PC-9 (cell line): ENCODE measurements at regions of chr10 and their contacts with region 1.

Region 1: GRCh38 chr10:58781873-58782488 is 269.3 kb downstream of the BICC1 start:
- DNase-seq: peak in 1 of 2 experiments; percentile 4
- H3K4me3 ChIP-seq: no peak overlapping the region
- H3K27ac ChIP-seq: no peak overlapping the region
- H3K4me1 ChIP-seq: no peaks in the 10 kb centered on the region
- H3K27me3 ChIP-seq: no peaks in the 10 kb centered on the region
- CTCF ChIP-seq: peak; percentile 84

Region 2: GRCh38 chr10:58734116-58734515 is 47.9 kb before region 1 on chr10:
- CTCF ChIA-PET with region 1: no interaction called
- POLR2A ChIA-PET with region 1: no interaction called
- intact Hi-C with region 1: no loop called
- DNase-seq: no peak
- H3K4me3 ChIP-seq: no peak overlapping the region
- H3K27ac ChIP-seq: no peak overlapping the region
- H3K4me1 ChIP-seq: no peaks in the 10 kb centered on the region
- H3K27me3 ChIP-seq: 0 out of 2 replicates have a peak, but pooled peaks cover 4% of the 10 kb centered on the region
- CTCF ChIP-seq: no peak

Region 3: GRCh38 chr10:58807629-58808022 is 25.6 kb after region 1 on chr10:
- CTCF ChIA-PET with region 1: no interaction called
- POLR2A ChIA-PET with region 1: no interaction called
- intact Hi-C with region 1: no loop called
- DNase-seq: peak in 1 of 2 experiments; percentile 43
- H3K4me3 ChIP-seq: no peak overlapping the region
- H3K27ac ChIP-seq: no peak overlapping the region
- H3K4me1 ChIP-seq: peaks cover 10% of the 10 kb centered on the region; the same call in 1 of the 2 replicates
- H3K27me3 ChIP-seq: no peaks in the 10 kb centered on the region
- CTCF ChIP-seq: no peak

Region 4: DNA sequence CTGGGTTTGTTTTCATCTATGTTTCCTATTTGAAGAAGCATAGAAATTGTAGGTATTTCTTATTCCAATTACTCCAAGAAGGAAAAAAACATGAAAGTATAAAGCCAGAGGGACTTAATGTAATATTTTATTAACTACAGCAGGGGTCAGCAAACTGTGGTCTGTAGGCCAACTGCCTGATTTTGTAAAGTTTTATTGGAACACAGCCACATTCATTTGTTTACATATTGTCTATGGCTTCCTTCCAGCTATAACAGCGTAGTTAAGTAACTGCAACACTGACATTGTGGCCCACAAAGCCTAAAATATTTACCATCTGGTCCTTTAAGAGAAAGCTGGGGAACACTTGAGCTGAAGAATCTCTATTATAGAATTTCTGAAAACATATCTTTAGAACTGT is 36.9 kb after region 1 on chr10:
- CTCF ChIA-PET with region 1: no interaction called
- POLR2A ChIA-PET with region 1: no interaction called
- intact Hi-C with region 1: no loop called
- DNase-seq: peak in 1 of 2 experiments; percentile 64
- H3K4me3 ChIP-seq: no peak overlapping the region
- H3K27ac ChIP-seq: no peak overlapping the region
- H3K4me1 ChIP-seq: peaks cover 22% of the 10 kb centered on the region
- H3K27me3 ChIP-seq: no peaks in the 10 kb centered on the region
- CTCF ChIP-seq: no peak

Region 5: GRCh38 chr10:58919927-58920654 is 138.1 kb after region 1 on chr10:
- CTCF ChIA-PET with region 1: no interaction called
- POLR2A ChIA-PET with region 1: no interaction called
- intact Hi-C with region 1: loop called (anchors 5 kb)
- DNase-seq: peak in 1 of 2 experiments; percentile 74
- H3K4me3 ChIP-seq: no peak overlapping the region
- H3K27ac ChIP-seq: peak overlapping the region; percentile 17; the same call in 1 of the 2 replicates
- H3K4me1 ChIP-seq: 0 out of 2 replicates have a peak, but pooled peaks cover 15% of the 10 kb centered on the region
- H3K27me3 ChIP-seq: no peaks in the 10 kb centered on the region
- CTCF ChIP-seq: no peak

Region 6: DNA sequence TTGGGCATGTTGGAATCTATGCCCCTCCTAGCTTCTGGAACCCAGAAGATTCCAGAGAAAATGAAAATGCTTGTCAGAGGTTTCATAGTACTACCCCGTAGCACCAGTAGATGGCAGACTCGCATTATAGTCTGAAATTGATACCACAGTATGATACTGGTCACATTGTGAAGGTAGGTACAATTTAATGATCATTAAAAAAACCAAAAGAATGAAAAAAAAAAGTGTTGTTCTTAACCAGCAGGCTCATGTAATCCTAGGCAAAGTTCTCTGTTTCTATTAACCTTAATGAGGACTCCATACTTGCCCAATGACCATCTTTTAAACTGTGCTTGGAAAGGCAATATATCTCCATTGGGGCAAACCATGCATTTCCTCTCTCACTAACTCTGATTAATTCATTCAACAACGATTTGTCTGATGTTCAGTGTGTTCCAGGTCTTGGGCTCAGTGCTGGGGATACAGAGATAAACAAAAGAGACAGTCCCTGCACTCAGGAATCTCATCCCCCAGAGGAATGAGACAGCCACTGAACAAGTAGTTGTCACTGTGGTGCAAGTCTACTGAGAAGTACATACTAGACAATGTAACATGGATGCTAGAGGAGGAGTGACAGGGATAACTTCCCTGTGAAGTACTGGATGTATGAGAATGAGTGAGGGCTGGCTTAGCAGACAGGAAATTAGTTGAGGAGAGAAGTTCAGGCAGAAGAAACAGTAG is 170.9 kb after region 1 on chr10:
- CTCF ChIA-PET with region 1: no interaction called
- POLR2A ChIA-PET with region 1: no interaction called
- intact Hi-C with region 1: loop called (anchors 1 kb)
- DNase-seq: peak in 1 of 2 experiments; percentile 15
- H3K4me3 ChIP-seq: no peak overlapping the region
- H3K27ac ChIP-seq: no peak overlapping the region
- H3K4me1 ChIP-seq: no peaks in the 10 kb centered on the region
- H3K27me3 ChIP-seq: no peaks in the 10 kb centered on the region
- CTCF ChIP-seq: peak; percentile 85

Region 7: GRCh38 chr10:59181668-59182067 is 399.7 kb after region 1 on chr10:
- CTCF ChIA-PET with region 1: no interaction called
- POLR2A ChIA-PET with region 1: no interaction called
- intact Hi-C with region 1: loop called (anchors 2 kb)
- DNase-seq: no peak
- H3K4me3 ChIP-seq: no peak overlapping the region
- H3K27ac ChIP-seq: no peak overlapping the region
- H3K4me1 ChIP-seq: no peaks in the 10 kb centered on the region
- H3K27me3 ChIP-seq: no peaks in the 10 kb centered on the region
- CTCF ChIP-seq: peak; percentile 60

Region 8: DNA sequence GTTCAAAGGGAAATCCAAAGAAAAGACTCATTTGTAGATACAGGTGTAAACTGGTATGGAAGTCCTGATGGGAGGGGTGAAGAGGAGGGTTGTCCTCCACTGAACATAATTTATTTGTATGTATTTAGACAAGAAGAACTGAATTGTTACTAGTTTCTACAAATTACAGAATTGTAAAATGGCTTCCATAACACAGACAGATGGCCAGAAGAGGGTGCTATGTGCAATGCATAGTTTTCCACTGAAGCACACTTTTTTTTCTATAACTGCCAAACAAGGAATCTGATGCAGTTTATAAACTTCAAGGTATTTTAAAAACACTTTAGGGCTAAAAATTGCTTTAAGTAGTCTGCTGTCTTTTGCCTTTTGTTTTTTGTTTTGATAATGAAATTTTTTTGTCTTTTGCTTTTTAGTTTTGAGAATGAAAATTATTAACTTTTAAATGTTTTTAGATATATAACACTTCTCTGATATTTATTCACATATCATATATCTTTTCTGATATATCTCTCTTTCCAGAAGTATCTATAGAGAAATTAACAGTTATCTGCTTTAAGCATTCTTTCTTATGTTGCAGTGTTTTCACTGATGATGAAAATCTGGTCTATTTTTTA is 452.9 kb after region 1 on chr10:
- CTCF ChIA-PET with region 1: no interaction called
- POLR2A ChIA-PET with region 1: no interaction called
- intact Hi-C with region 1: loop called (anchors 2 kb)
- DNase-seq: peak in 1 of 2 experiments; percentile 1
- H3K4me3 ChIP-seq: no peak overlapping the region
- H3K27ac ChIP-seq: no peak overlapping the region
- H3K4me1 ChIP-seq: no peaks in the 10 kb centered on the region
- H3K27me3 ChIP-seq: no peaks in the 10 kb centered on the region
- CTCF ChIP-seq: peak; percentile 62